H1 (cell line): ENCODE measurements at regions of chr1 and their contacts with region 1.

Region 1: DNA sequence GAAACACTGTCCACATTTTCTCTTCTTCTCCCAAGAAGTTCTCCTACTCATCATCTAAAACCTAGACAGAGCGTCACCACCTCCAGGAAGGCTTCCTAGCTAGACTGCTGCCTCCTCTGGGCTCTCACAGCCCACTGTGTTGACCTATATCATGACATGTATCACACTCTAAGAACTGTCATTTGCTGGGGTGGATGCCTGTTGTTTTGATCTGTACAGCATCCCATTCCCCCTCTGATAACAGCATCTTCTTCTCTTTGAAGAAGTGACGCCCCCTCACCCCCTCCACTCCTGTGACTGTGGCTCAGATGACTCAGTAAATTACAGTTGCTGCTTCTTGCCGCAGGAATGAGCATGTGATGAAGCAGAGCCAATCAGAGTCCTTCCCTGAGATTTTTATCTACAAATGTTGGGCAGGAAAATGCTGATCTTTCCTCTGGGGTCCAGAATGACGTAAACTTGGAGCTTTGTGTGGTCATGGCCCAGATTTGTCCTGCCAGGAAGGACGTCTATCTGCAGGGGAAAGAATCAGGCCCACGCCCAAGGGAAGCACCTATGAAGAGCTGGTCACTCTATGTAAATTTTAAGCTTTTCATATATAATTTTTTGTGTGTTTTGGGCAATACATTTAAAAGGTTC is 28.0 kb upstream of the FOXO6 start:
- DNase-seq: peak in 1 of 2 experiments; percentile 23
- H3K4me3 ChIP-seq: no peak overlapping the region
- H3K27ac ChIP-seq: no peak overlapping the region
- H3K4me1 ChIP-seq: peaks cover 0 to 4% (median 4%) of the 10 kb centered on the region in 4 experiments; a peak in 5 of 7 replicates
- H3K27me3 ChIP-seq: no peaks in the 10 kb centered on the region
- CTCF ChIP-seq: no peak
- EP300 ChIP-seq: no peak
- POLR2A ChIP-seq: no peak
- RAD21 ChIP-seq: no peak

Region 2: GRCh38 chr1:41078616-41079015 is 254.6 kb before region 1 on chr1:
- CTCF ChIA-PET with region 1: no interaction called
- POLR2A ChIA-PET with region 1: no interaction called
- DNase-seq: no peak
- H3K4me3 ChIP-seq: no peak overlapping the region
- H3K27ac ChIP-seq: no peak overlapping the region
- H3K4me1 ChIP-seq: no peaks in the 10 kb centered on the region
- H3K27me3 ChIP-seq: peaks cover 0 to 1% (median 0%) of the 10 kb centered on the region in 4 experiments; a peak in 1 of 7 replicates
- CTCF ChIP-seq: no peak
- EP300 ChIP-seq: no peak
- POLR2A ChIP-seq: no peak
- RAD21 ChIP-seq: no peak

Region 3: GRCh38 chr1:41305576-41306363 is 27.5 kb before region 1 on chr1:
- CTCF ChIA-PET with region 1: interaction called, 10 read pairs
- POLR2A ChIA-PET with region 1: no interaction called
- DNase-seq: peak in 1 of 2 experiments; percentile 44
- H3K4me3 ChIP-seq: no peak overlapping the region
- H3K27ac ChIP-seq: no peak overlapping the region
- H3K4me1 ChIP-seq: no peaks in the 10 kb centered on the region; a peak in 1 of 7 replicates
- H3K27me3 ChIP-seq: no peaks in the 10 kb centered on the region
- CTCF ChIP-seq: no peak
- EP300 ChIP-seq: no peak
- POLR2A ChIP-seq: no peak
- RAD21 ChIP-seq: no peak

Region 4: GRCh38 chr1:41313661-41314131 is 19.6 kb before region 1 on chr1:
- CTCF ChIA-PET with region 1: interaction called, 55 read pairs
- POLR2A ChIA-PET with region 1: interaction called, 3 read pairs
- DNase-seq: peak; percentile 29 to 70
- H3K4me3 ChIP-seq: no peak overlapping the region
- H3K27ac ChIP-seq: no peak overlapping the region
- H3K4me1 ChIP-seq: peaks cover 0 to 14% (median 2%) of the 10 kb centered on the region in 4 experiments; a peak in 4 of 7 replicates
- H3K27me3 ChIP-seq: peaks cover 0 to 2% (median 0%) of the 10 kb centered on the region in 4 experiments; a peak in 1 of 7 replicates
- CTCF ChIP-seq: peak; percentile 64 to 87 (median 81)
- EP300 ChIP-seq: no peak
- POLR2A ChIP-seq: no peak
- RAD21 ChIP-seq: peak; percentile 55 to 73

Region 5: GRCh38 chr1:41322835-41323627 is 10.2 kb before region 1 on chr1:
- CTCF ChIA-PET with region 1: interaction called, 55 read pairs
- POLR2A ChIA-PET with region 1: interaction called, 5 read pairs
- DNase-seq: peak; percentile 36 to 80
- H3K4me3 ChIP-seq: no peak overlapping the region
- H3K27ac ChIP-seq: no peak overlapping the region
- H3K4me1 ChIP-seq: peaks cover 0 to 10% (median 6%) of the 10 kb centered on the region in 4 experiments; a peak in 6 of 7 replicates
- H3K27me3 ChIP-seq: no peaks in the 10 kb centered on the region; a peak in 1 of 7 replicates
- CTCF ChIP-seq: peak; percentile 87 to 93 (median 89)
- EP300 ChIP-seq: no peak
- POLR2A ChIP-seq: no peak
- RAD21 ChIP-seq: peak; percentile 94 to 96

Region 6: DNA sequence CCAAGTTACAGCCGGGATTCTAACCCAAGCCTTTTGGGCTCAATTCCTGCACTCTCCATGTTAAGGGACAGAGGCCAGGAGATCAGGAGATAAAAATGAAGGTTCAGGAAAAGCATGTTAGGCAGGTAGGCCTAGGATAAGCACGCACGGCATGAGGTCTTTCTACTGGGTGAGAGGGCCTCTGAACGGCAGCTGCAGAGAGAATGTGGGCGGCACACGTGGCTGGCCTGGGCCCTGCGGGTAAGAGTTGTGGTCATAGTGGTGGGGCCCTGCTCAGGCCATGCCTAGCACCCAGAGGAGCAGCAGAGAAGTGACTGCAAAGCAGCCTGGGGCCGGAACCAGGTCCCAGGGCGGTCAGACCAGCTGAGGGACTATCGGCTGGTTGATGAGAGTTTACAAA is 20.5 kb after region 1 on chr1:
- CTCF ChIA-PET with region 1: interaction called, 43 read pairs
- POLR2A ChIA-PET with region 1: interaction called, 3 read pairs
- DNase-seq: peak in 1 of 2 experiments; percentile 26
- H3K4me3 ChIP-seq: no peak overlapping the region
- H3K27ac ChIP-seq: no peak overlapping the region
- H3K4me1 ChIP-seq: peaks cover 0 to 16% (median 13%) of the 10 kb centered on the region in 4 experiments; a peak in 5 of 7 replicates
- H3K27me3 ChIP-seq: peaks cover 0 to 7% (median 3%) of the 10 kb centered on the region in 4 experiments; a peak in 3 of 7 replicates
- CTCF ChIP-seq: no peak
- EP300 ChIP-seq: no peak
- POLR2A ChIP-seq: no peak
- RAD21 ChIP-seq: no peak

Region 7: GRCh38 chr1:41404308-41404761 is 71.1 kb after region 1 on chr1:
- CTCF ChIA-PET with region 1: interaction called, 336 read pairs
- POLR2A ChIA-PET with region 1: no interaction called
- DNase-seq: peak in 1 of 2 experiments; percentile 76
- H3K4me3 ChIP-seq: peak overlapping the region in 1 of 4 experiments; percentile 25; a peak in 1 of 8 replicates
- H3K27ac ChIP-seq: no peak overlapping the region
- H3K4me1 ChIP-seq: peaks cover 4 to 27% (median 14%) of the 10 kb centered on the region in 4 experiments
- H3K27me3 ChIP-seq: peaks cover 0 to 5% (median 2%) of the 10 kb centered on the region in 4 experiments; a peak in 4 of 7 replicates
- CTCF ChIP-seq: no peak
- EP300 ChIP-seq: no peak
- POLR2A ChIP-seq: no peak
- RAD21 ChIP-seq: no peak

Region 8: GRCh38 chr1:41423511-41424221 is 90.4 kb after region 1 on chr1:
- CTCF ChIA-PET with region 1: interaction called, 420 read pairs
- POLR2A ChIA-PET with region 1: interaction called, 3 read pairs
- DNase-seq: peak in 1 of 2 experiments; percentile 79
- H3K4me3 ChIP-seq: no peak overlapping the region
- H3K27ac ChIP-seq: no peak overlapping the region
- H3K4me1 ChIP-seq: peaks cover 0 to 7% (median 2%) of the 10 kb centered on the region in 4 experiments; a peak in 4 of 7 replicates
- H3K27me3 ChIP-seq: no peaks in the 10 kb centered on the region
- CTCF ChIP-seq: peak; percentile 62 to 89 (median 65)
- EP300 ChIP-seq: no peak
- POLR2A ChIP-seq: no peak
- RAD21 ChIP-seq: peak; percentile 58 to 72

Region 9: GRCh38 chr1:41448831-41449230 is 115.6 kb after region 1 on chr1:
- CTCF ChIA-PET with region 1: no interaction called
- POLR2A ChIA-PET with region 1: no interaction called
- DNase-seq: no peak
- H3K4me3 ChIP-seq: no peak overlapping the region
- H3K27ac ChIP-seq: no peak overlapping the region
- H3K4me1 ChIP-seq: no peaks in the 10 kb centered on the region; a peak in 2 of 7 replicates
- H3K27me3 ChIP-seq: no peaks in the 10 kb centered on the region
- CTCF ChIP-seq: no peak
- EP300 ChIP-seq: no peak
- POLR2A ChIP-seq: no peak
- RAD21 ChIP-seq: no peak